ENCODE measurements at regions of chr6 and their contacts with region 1.

Region 1: GRCh38 chr6:160534050-160534696 is 129.9 kb downstream of the LPA start:
- DNase-seq: peak; percentile 31 to 45
- ATAC-seq: peak in 7 of 8 donors; percentile 42 to 81 (median 61)
- H3K4me3 ChIP-seq: peak overlapping the region in 5 of 10 donors; percentile 8 to 41 (median 23)
- H3K27ac ChIP-seq: no peak overlapping the region
- H3K4me1 ChIP-seq: peaks cover 0 to 7% (median 0%) of the 10 kb centered on the region in 9 donors
- H3K27me3 ChIP-seq: peaks cover 0 to 6% (median under 1%) of the 10 kb centered on the region in 7 donors
- CTCF ChIP-seq: peak; percentile 75 to 96 (median 93)

Region 2: DNA sequence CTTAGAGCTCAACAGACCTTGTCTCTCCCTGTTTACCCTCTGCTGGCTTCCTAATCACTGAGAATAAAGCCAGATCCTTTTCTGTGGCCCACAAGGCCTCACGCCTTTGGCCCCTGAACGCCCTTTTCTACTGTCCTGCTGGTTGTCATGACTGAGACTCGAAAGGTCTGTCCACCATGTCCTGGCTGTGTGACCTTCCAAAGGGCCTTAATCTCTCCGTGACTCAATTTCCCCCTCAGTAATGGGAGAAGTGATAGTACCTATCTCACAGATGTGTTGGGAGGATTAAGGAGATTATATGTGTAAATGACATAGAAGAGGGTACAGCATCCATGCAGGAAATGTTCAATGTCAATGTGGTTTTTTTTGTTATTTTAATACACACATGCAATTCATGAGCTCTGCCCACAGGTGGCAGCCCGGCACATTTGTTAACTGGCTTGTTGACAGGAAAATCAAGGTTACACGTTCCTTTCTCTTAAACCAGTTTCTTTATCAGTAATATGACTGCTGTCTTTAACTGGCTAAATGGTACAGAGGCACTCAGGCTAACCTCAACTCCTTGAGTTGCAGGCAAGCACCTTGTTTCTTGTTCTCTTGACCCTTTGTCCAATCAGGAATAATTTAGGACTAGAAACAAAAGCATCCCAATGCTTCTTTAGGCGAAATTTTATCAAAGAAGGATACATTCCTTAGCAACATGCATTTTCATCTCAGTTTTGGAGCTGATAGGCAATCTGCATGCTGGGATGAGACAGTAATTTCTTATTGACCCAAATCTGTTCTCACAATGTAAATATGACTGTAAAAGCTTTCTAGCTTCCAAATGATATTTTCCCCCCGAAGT is 396.0 kb before region 1 on chr6:
- intact Hi-C with region 1: loop called in 1 of 10 experiments (anchors 10 kb)
- DNase-seq: peak; percentile 37 to 48
- ATAC-seq: peak in 3 of 8 donors; percentile 20 to 42 (median 39)
- H3K4me3 ChIP-seq: no peak overlapping the region
- H3K27ac ChIP-seq: no peak overlapping the region
- H3K4me1 ChIP-seq: peaks cover 0 to 8% (median 4%) of the 10 kb centered on the region in 9 donors
- H3K27me3 ChIP-seq: peaks cover 0 to 8% (median 0%) of the 10 kb centered on the region in 7 donors
- CTCF ChIP-seq: peak; percentile 48 to 80 (median 68)

Region 3: DNA sequence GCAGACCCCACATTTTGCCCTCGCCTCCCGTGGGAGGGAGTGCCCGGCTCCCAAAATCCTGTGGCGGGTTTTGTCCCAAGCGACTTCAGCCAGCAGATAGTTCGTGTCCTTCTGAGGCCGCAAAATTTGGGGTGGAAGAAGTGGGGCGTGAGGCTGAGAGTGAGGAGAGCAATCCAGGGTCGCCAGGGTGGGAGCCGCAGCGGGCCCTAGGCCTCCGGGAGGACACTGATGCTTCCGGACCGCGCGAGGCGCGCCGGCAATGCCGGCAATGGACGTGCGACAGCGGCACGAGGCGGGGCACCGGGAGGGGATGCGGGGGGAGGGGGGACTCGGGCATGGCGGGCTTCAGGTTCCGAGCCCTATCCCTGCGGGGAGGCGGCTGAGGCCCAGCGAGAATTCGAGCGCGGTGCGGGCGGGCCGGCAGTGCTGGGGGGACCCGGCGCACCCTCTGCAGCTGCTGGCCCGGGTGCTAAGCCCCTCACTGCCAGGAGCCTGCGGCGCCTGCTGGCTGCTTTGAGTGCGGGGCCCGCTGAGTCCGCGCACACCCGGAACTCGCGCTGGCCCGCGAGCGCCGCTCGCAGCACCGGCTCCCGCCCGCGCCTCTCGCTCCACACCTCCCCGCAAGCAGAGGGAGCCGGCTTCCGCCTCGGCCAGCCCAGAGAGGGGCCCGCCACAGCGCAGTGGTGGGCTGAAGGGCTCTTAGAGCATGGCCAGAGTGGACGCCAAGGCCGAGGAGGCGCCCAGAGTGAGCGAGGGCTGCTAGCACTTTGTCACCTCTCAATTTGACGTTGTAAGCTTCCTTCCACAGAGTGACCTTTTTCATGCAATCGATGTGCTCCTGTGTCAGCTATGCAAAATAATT is 13.9 kb before region 1 on chr6:
- intact Hi-C with region 1: loop called in 2 of 10 experiments (anchors 1 to 2 kb)
- DNase-seq: peak; percentile 68 to 78
- ATAC-seq: peak; percentile 90 to 98 (median 96)
- H3K4me3 ChIP-seq: peak overlapping the region; percentile 49 to 74 (median 66)
- H3K27ac ChIP-seq: peak overlapping the region in 9 of 10 donors; percentile 39 to 83 (median 56)
- H3K4me1 ChIP-seq: peaks cover 0 to 14% (median 5%) of the 10 kb centered on the region in 9 donors
- H3K27me3 ChIP-seq: peaks cover 0 to 10% (median 0%) of the 10 kb centered on the region in 7 donors
- CTCF ChIP-seq: peak in 7 of 9 donors; percentile 2 to 95 (median 14)

Measured in heart right ventricle (tissue), 16 donors.